AG04450 (cell line): ENCODE measurements at regions of chr3 and their contacts with region 1.

Region 1: GRCh38 chr3:70550723-70551319 is 238.4 kb upstream of the MDFIC2 start:
- DNase-seq: no peak
- H3K4me3 ChIP-seq: no peak overlapping the region
- H3K27ac ChIP-seq: no peak overlapping the region
- H3K27me3 ChIP-seq: no peaks in the 10 kb centered on the region
- CTCF ChIP-seq: peak; percentile 79

Region 2: GRCh38 chr3:70531063-70531657 is 19.7 kb before region 1 on chr3:
- CTCF ChIA-PET with region 1: interaction called, 19 read pairs
- POLR2A ChIA-PET with region 1: no interaction called
- DNase-seq: no peak
- H3K4me3 ChIP-seq: no peak overlapping the region
- H3K27ac ChIP-seq: no peak overlapping the region
- H3K27me3 ChIP-seq: peaks cover 8% of the 10 kb centered on the region
- CTCF ChIP-seq: peak; percentile 75

Region 3: DNA sequence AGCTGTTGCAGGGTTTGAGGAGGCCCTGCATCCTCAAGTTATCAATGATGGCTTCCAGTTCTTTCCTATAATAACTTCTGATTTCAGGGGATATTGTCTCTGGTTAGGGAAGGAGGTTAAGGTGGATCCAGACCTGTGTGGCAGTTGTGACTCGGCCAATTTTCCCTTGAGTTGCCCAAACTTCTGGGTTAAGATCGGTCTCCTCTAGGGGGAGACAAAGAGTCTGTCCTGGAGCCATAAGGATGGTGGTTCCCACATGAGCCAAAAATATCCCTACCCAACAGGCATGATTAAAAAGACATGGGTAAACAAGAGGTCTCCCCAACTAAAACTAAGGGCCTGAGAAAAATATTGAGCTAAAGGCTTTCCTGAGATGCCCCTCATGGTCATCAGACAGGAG is 10.9 kb before region 1 on chr3:
- CTCF ChIA-PET with region 1: interaction called, 19 read pairs
- POLR2A ChIA-PET with region 1: no interaction called
- DNase-seq: no peak
- H3K4me3 ChIP-seq: no peak overlapping the region
- H3K27ac ChIP-seq: no peak overlapping the region
- H3K27me3 ChIP-seq: peaks cover 23% of the 10 kb centered on the region
- CTCF ChIP-seq: no peak

Region 4: GRCh38 chr3:70564552-70564951 is 13.7 kb after region 1 on chr3:
- CTCF ChIA-PET with region 1: interaction called, 16 read pairs
- POLR2A ChIA-PET with region 1: no interaction called
- DNase-seq: no peak
- H3K4me3 ChIP-seq: no peak overlapping the region
- H3K27ac ChIP-seq: no peak overlapping the region
- H3K27me3 ChIP-seq: peaks cover 16% of the 10 kb centered on the region
- CTCF ChIP-seq: no peak

Region 5: DNA sequence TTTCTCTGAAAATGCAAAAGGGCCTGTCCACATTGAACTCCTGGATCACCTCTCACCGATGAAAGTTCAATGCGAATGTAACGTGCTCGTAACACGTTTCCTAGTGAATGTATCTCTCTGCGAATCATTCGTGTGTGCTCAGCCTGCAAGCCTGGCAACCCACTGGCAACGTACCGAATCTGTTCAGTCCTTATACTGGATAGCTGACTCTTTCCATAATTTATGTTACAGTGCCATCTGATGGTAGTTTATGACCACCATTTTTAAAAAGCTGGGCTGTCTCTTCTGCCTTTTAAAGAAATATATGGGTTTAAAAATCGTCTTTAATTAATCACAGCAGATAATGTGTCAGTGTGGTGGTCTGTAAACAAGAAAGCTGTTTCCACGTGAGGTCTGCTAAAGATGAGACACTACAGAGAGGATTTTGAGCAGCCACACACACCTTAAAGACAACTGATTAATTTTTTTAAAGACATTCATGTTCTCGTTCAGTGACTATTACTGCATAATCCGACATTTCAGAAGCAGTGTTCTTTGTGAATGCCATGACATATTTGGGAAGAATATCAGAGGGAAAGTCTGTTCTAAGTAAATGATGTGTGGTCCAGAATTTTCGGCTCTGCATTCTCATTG is 1102.1 kb after region 1 on chr3:
- CTCF ChIA-PET with region 1: interaction called, 14 read pairs
- POLR2A ChIA-PET with region 1: no interaction called
- DNase-seq: peak; percentile 45
- H3K4me3 ChIP-seq: no peak overlapping the region
- H3K27ac ChIP-seq: no peak overlapping the region
- H3K27me3 ChIP-seq: no peaks in the 10 kb centered on the region
- CTCF ChIP-seq: peak; percentile 58

Region 6: GRCh38 chr3:71681224-71681668 is 1130.4 kb after region 1 on chr3:
- CTCF ChIA-PET with region 1: interaction called, 14 read pairs
- POLR2A ChIA-PET with region 1: no interaction called
- DNase-seq: peak; percentile 47
- H3K4me3 ChIP-seq: no peak overlapping the region
- H3K27ac ChIP-seq: no peak overlapping the region
- H3K27me3 ChIP-seq: no peaks in the 10 kb centered on the region
- CTCF ChIP-seq: peak; percentile 91